ENCODE measurements at regions of chr10 and their contacts with region 1.

Region 1: DNA sequence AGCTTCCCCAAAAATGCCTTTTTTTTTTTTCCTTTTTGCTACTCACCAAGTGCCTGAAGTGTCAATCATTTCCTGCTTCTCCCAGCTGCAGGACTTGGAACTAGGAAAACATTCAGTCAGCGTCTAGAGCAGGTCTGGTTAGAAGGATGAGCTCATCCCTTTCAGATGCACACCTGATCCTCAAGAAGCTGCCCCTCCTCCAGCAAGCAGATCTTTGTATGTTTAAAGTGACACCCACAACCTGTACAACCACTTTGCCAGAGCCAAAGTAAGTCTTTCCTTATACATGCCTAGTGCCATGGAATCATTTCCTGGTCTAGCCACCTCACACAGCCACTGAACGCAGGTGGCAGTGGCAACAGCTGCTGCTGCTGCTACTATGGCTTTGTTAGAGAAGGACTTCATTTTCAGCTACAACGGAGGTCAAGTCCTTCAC is 10.4 kb upstream of the USP54 start:
- DNase-seq: peak; percentile 100
- ATAC-seq: peak; percentile 97
- H3K4me3 ChIP-seq: peak overlapping the region; percentile 5; the same call in 1 of the 2 replicates
- H3K27ac ChIP-seq: peak overlapping the region; percentile 53
- H3K4me1 ChIP-seq: peaks cover 26% of the 10 kb centered on the region
- H3K27me3 ChIP-seq: no peaks in the 10 kb centered on the region
- CTCF ChIP-seq: no peak

Region 2: GRCh38 chr10:73576178-73576889 is 25.2 kb before region 1 on chr10:
- CTCF ChIA-PET with region 1: interaction called, 8 read pairs
- POLR2A ChIA-PET with region 1: interaction called, 4 read pairs
- intact Hi-C with region 1: loop called (anchors 1 kb)
- DNase-seq: peak; percentile 98
- ATAC-seq: peak; percentile 61
- H3K4me3 ChIP-seq: no peak overlapping the region
- H3K27ac ChIP-seq: peak overlapping the region; percentile 49
- H3K4me1 ChIP-seq: peaks cover 34% of the 10 kb centered on the region
- H3K27me3 ChIP-seq: no peaks in the 10 kb centered on the region
- CTCF ChIP-seq: no peak

Region 3: DNA sequence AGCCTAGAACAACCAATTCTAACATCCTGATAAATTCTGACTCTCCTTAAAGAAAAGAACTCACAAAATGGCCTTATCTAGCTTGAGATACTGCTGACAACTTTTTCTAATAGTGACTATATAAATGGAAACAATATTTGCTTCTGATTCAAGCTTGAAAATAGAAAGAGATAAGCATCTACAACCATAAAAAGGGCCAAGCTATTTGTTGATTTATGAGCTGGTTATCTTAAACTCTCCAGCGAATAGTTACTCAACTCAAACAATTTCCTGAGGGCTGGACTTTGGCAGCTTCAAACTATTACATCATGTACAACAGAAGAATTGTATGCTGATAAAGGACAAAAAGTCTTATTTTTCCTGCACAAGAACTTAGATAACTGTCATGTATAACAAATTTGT is 14.9 kb before region 1 on chr10:
- CTCF ChIA-PET with region 1: interaction called, 10 read pairs
- POLR2A ChIA-PET with region 1: interaction called, 11 read pairs
- intact Hi-C with region 1: loop called (anchors 1 kb)
- DNase-seq: peak; percentile 100
- ATAC-seq: peak; percentile 75
- H3K4me3 ChIP-seq: peak overlapping the region; percentile 19
- H3K27ac ChIP-seq: peak overlapping the region; percentile 66
- H3K4me1 ChIP-seq: peaks cover 68% of the 10 kb centered on the region
- H3K27me3 ChIP-seq: no peaks in the 10 kb centered on the region
- CTCF ChIP-seq: no peak

Region 4: GRCh38 chr10:73625884-73626752 is 24.6 kb after region 1 on chr10:
- CTCF ChIA-PET with region 1: interaction called, 10 read pairs
- POLR2A ChIA-PET with region 1: interaction called, 25 read pairs
- intact Hi-C with region 1: loop called (anchors 1 kb)
- DNase-seq: peak; percentile 100
- ATAC-seq: peak; percentile 97
- H3K4me3 ChIP-seq: peak overlapping the region; percentile 76
- H3K27ac ChIP-seq: peak overlapping the region; percentile 40
- H3K4me1 ChIP-seq: peaks cover 14% of the 10 kb centered on the region
- H3K27me3 ChIP-seq: no peaks in the 10 kb centered on the region
- CTCF ChIP-seq: no peak

Region 5: GRCh38 chr10:73874267-73875138 is 273.0 kb after region 1 on chr10 and contains the start of gene CAMK2G:
- CTCF ChIA-PET with region 1: no interaction called
- POLR2A ChIA-PET with region 1: no interaction called
- intact Hi-C with region 1: no loop called
- DNase-seq: peak; percentile 100
- ATAC-seq: peak; percentile 87
- H3K4me3 ChIP-seq: peak within 1 kb of the TSS; percentile 68
- H3K27ac ChIP-seq: no peak within 1 kb of the TSS
- H3K4me1 ChIP-seq: peaks cover 48% of the 10 kb centered on the region
- H3K27me3 ChIP-seq: no peaks in the 10 kb centered on the region
- CTCF ChIP-seq: no peak
- total RNA-seq, gene CAMK2G: 170 and 179 TPM in 2 replicates

Measured in PC-3 (cell line).